K562 (cell line): ENCODE measurements at regions of chr1 and their contacts with region 1.

Region 1: DNA sequence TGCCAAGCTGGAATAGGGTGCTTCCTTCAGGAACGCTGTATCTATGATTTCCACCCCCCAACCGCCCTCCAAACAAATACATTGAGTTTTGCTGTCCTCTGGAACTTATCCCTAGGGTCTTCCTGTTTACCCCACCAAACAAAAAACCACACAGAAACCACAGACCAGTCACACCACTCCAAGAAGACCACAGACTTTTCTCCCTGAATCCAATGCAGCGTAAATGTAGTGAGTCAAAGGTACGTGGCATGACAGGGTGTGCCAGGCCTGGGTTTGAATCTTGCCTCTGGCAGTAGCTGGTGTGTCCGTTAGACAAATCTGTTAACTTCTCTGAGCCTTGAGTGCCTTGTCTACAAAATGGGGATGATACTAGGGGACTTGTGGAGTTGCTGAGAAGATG is 27.8 kb downstream of the ASAP3 start:
- DNase-seq: no peak
- ATAC-seq: no peak
- H3K4me3 ChIP-seq: no peak overlapping the region
- H3K27ac ChIP-seq: no peak overlapping the region
- H3K4me1 ChIP-seq: peaks cover 0 to 10% of the 10 kb centered on the region in 2 experiments; a peak in 3 of 5 replicates
- H3K27me3 ChIP-seq: no peaks in the 10 kb centered on the region
- CTCF ChIP-seq: no peak
- EP300 ChIP-seq: no peak
- POLR2A ChIP-seq: no peak
- RAD21 ChIP-seq: no peak

Region 2: DNA sequence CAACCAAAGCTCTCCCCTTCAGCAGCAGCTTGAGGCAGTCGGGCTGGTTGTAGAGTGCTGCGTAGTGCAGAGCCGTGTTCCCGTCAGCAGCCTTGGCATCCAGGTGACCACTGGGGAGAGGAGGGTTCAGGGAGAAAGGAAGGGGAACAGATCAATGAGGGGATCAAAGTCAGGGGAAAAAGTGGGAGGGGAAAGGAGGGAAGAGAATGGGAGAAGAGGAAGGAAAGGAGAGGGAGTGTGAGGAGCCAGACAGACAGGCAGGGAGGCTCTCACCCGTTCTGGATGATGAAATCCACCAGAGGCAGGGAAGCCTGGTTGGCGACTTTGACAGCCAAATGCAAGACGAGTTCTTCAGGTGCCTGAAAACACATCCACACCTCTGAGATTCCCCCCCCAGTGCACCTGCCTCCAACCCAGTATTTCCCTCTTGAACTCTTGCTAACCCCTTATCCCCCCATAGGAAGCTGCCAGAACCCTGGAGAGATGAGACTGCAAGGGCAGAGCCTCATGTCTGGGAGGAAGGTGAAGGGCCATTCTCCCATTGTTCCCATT is 21.9 kb before region 1 on chr1:
- CTCF ChIA-PET with region 1: no interaction called
- POLR2A ChIA-PET with region 1: no interaction called
- in situ Hi-C with region 1: no loop called
- intact Hi-C with region 1: no loop called
- DNase-seq: no peak
- ATAC-seq: no peak
- H3K4me3 ChIP-seq: no peak overlapping the region
- H3K27ac ChIP-seq: no peak overlapping the region
- H3K4me1 ChIP-seq: peaks cover 7 to 24% of the 10 kb centered on the region in 2 experiments; a peak in 4 of 5 replicates
- H3K27me3 ChIP-seq: no peaks in the 10 kb centered on the region
- CTCF ChIP-seq: no peak
- EP300 ChIP-seq: no peak
- POLR2A ChIP-seq: no peak
- RAD21 ChIP-seq: no peak

Region 3: DNA sequence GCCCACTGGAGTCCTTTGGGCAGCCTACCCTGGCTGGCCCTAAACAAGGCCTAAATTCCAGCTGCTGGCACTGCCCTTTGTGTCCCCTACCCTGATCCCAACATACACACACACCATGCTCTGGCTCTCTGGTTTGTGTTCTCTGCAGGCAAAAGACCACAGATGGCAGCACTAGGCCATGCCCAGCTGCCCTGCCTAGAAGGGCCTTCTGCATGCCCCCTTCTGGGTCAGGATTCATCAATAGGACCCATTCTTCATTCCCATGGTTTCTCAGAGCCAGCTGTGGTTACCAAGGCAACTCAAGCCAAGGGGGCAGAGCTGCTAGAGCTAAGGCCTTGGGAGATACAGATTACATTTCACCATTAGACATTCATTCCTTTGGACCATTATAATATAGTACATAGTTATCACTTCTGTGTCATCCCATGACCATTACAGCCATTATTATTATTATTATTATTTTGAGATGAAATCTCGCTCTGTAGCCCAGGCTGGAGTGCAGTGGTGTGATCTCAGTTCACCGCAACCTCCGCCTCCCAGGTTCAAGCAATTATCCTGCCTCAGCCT is 10.3 kb after region 1 on chr1:
- CTCF ChIA-PET with region 1: no interaction called
- POLR2A ChIA-PET with region 1: interaction called, 11 read pairs
- in situ Hi-C with region 1: no loop called
- intact Hi-C with region 1: no loop called
- DNase-seq: no peak
- ATAC-seq: no peak
- H3K4me3 ChIP-seq: no peak overlapping the region
- H3K27ac ChIP-seq: no peak overlapping the region
- H3K4me1 ChIP-seq: peaks cover 0 to 6% of the 10 kb centered on the region in 2 experiments; a peak in 2 of 5 replicates
- H3K27me3 ChIP-seq: no peaks in the 10 kb centered on the region
- CTCF ChIP-seq: no peak
- EP300 ChIP-seq: no peak
- POLR2A ChIP-seq: no peak
- RAD21 ChIP-seq: no peak